Activated CD8-positive, alpha-beta T cell treated with anti-CD3 and anti-CD28 coated beads for 36 hours (primary cell): ENCODE measurements at regions of chr13 and their contacts with region 1.

Region 1: DNA sequence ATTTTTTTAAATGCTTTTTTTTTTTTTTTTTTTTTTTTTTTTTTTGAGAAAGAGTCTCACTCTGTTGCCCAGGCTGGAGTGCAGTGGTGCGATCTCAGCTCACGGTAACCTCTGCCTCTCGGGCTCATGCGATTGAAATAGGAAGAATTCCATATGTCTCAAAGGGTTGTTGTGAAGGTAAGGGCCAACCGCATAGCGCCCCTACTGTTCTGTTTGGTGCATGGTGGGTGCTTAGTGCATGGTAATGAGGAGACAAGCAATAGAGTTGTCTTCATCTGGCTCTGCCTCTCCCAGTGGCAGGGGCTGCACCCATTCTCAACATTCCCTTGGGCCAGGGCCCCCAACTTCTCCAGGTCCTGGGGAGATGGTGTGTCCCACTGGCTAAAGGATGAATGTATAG is 68.7 kb downstream of the RASL11A start:
- DNase-seq: peak; percentile 70
- ATAC-seq: peak; percentile 86
- H3K4me3 Mint-ChIP-seq: no peak overlapping the region
- H3K27ac Mint-ChIP-seq: no peak overlapping the region
- H3K4me1 Mint-ChIP-seq: peaks cover 3% of the 10 kb centered on the region
- H3K27me3 Mint-ChIP-seq: no peaks in the 10 kb centered on the region
- CTCF ChIP-seq: peak; percentile 70

Region 2: DNA sequence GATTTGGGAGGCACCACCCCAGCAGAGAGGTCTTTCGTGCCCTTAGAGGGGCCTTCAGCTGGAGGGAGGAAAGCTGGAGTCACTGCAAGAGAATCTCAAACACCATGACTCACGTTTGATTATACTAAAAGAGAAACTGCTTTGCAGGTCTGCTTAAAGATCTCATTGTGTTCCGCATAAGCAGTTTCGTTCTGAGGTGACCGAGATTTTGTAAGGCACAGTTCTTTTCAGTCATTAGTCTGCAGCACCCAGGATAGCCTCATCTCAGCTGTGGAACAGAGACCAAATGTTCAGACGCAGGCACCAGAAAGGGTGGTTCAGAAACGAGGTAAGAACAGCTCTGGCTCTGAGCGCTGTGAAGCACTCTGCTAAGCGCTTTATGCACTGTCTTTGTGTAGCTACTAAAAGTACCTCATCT is 13.9 kb after region 1 on chr13:
- CTCF ChIA-PET with region 1: interaction called, 15 read pairs
- POLR2A ChIA-PET with region 1: interaction called, 3 read pairs
- intact Hi-C with region 1: no loop called
- DNase-seq: peak; percentile 55
- ATAC-seq: peak; percentile 91
- H3K4me3 Mint-ChIP-seq: no peak overlapping the region
- H3K27ac Mint-ChIP-seq: no peak overlapping the region
- H3K4me1 Mint-ChIP-seq: peaks cover 10% of the 10 kb centered on the region
- H3K27me3 Mint-ChIP-seq: no peaks in the 10 kb centered on the region
- CTCF ChIP-seq: no peak